Activated B cell treated with CpG ODN at 0.5 μM for 24 hours (primary cell): ENCODE measurements at regions of chr4 and their contacts with region 1.

Region 1: GRCh38 chr4:103008875-103009729 is 10.4 kb downstream of the SLC9B1 start:
- DNase-seq: no peak
- ATAC-seq: peak; percentile 92
- H3K4me3 Mint-ChIP-seq: no peak overlapping the region
- H3K27ac Mint-ChIP-seq: no peak overlapping the region
- H3K4me1 Mint-ChIP-seq: no peaks in the 10 kb centered on the region
- H3K27me3 Mint-ChIP-seq: no peaks in the 10 kb centered on the region
- CTCF ChIP-seq: peak; percentile 68

Region 2: DNA sequence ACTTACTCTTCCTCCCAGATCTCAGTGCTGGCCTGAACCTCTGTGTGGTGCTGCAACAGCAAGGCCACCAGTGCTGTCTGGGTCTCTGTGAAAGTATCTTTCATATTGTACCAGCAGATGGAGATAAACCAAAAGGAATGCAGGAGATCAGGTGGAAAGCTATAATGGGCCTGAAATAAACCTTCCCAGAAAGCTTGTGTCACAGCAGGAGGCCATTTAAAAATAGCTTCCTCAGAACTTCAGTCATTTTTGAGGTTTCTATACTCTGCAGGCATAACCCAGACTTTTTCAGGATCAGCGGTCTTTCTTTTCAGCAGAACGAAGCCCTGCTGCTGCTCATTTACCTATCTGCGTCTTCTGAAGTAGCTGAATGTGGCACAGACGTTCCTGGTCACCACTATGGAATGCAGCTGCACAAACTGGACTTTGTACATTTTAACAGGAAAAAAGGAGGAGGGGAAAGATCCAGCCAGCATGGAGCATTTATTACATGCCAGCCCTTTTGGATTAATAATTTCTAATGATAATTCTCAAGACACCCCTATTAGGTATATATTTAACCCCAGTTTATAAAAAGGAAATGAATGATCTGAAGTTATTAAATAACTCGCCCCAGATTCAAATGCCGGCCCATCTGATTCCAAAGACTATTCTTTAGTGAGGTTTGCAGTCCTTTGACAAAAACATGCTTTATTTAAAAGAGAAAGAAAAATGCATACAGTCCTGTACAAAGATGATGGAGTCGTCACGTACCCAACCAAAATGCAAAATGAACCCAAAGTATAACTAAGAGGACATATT is 388.2 kb before region 1 on chr4:
- CTCF ChIA-PET with region 1: interaction called, 10 read pairs
- POLR2A ChIA-PET with region 1: no interaction called
- intact Hi-C with region 1: loop called (anchors 1 kb)
- DNase-seq: no peak
- ATAC-seq: no peak
- H3K4me3 Mint-ChIP-seq: no peak overlapping the region
- H3K27ac Mint-ChIP-seq: peak overlapping the region; percentile 30
- H3K4me1 Mint-ChIP-seq: peaks cover 27% of the 10 kb centered on the region
- H3K27me3 Mint-ChIP-seq: no peaks in the 10 kb centered on the region
- CTCF ChIP-seq: no peak

Region 3: DNA sequence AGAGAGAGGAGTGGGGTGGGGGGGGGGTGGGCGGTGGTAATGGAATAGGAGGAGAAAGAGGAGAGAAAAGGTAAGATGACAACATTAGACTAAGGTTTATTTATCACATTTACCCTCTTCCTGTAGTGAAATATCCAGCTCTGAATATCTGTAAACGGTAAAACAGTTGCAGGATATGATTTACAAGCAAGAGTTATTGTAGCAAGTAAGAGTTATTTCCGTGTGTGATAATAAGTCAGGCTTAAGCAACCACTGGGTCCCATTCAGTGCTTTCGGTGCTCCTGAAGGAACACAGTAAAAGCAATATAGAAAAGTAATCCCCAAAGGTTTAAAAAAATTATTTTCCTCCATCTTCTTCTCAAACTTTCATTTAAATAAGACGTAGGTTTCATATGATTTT is 351.9 kb before region 1 on chr4:
- CTCF ChIA-PET with region 1: interaction called, 3 read pairs
- POLR2A ChIA-PET with region 1: no interaction called
- intact Hi-C with region 1: loop called (anchors 10 kb)
- DNase-seq: no peak
- ATAC-seq: no peak
- H3K4me3 Mint-ChIP-seq: no peak overlapping the region
- H3K27ac Mint-ChIP-seq: no peak overlapping the region
- H3K4me1 Mint-ChIP-seq: no peaks in the 10 kb centered on the region
- H3K27me3 Mint-ChIP-seq: no peaks in the 10 kb centered on the region
- CTCF ChIP-seq: no peak

Region 4: DNA sequence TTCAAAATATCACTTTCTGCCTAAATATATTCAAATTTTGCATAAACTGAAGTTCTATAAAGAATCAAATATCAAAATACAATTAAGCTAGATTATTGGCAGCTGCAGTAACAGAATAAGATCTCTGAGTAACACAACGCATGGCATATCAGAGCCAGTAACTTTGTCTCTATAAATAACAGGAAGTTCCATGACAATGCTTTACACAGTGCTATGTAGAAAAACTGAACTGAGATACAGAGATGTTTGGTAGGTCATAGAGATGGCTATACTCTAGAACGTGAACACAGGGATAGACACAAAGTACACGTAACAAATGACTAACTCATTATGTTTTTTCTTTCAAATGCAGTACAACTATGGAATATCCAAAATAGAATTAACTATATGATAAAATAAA is 199.9 kb before region 1 on chr4:
- CTCF ChIA-PET with region 1: interaction called, 6 read pairs
- POLR2A ChIA-PET with region 1: no interaction called
- intact Hi-C with region 1: loop called (anchors 5 kb)
- DNase-seq: no peak
- ATAC-seq: peak; percentile 49
- H3K4me3 Mint-ChIP-seq: no peak overlapping the region
- H3K27ac Mint-ChIP-seq: peak overlapping the region; percentile 15
- H3K4me1 Mint-ChIP-seq: peaks cover 51% of the 10 kb centered on the region
- H3K27me3 Mint-ChIP-seq: no peaks in the 10 kb centered on the region
- CTCF ChIP-seq: no peak